ENCODE measurements at regions of chr1 and their contacts with region 1.

Region 1: DNA sequence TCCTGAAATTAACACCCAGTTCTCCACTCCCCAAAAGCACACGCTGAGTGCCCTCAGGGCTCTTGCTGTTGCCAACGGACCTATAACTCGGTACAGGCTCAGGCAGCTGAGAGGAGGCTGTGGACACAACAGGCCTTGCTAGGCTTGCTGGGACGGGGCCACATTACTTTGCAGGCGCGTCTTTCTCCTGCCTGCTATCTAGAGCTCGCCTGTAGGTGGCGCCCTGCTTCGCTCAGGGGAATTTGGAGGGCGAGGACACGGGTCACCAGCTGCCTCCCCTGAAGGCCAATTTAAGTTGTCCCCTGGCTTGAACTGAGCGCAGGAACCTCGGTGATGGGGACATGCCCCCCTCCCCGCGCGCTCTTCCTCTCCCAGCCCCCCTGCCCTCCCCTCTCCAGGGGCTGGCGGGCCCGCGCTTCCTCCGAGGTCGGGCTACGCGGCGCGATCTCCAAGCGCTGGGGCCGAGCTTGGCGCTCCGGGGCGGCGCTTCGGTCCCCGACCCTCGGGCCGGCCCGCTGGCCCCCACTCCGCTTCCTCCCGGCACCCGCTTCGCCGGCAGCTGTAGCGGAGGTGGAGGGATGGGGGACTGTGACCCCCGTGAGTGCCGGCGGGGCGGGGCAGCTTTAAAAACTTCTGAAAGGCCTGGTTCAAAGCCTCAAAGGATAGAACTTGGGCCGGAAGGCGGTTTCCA is 32.4 kb upstream of the NFIA start:
- DNase-seq: peak; percentile 79 to 96 (median 81)
- ATAC-seq: peak; percentile 70
- H3K4me3 ChIP-seq: peak overlapping the region; percentile 65
- H3K27ac ChIP-seq: peak overlapping the region; percentile 82
- H3K4me1 ChIP-seq: peaks cover 44 to 56% of the 10 kb centered on the region in 2 experiments
- H3K27me3 ChIP-seq: no peaks in the 10 kb centered on the region
- CTCF ChIP-seq: peak; percentile 89 to 97 (median 94)
- EP300 ChIP-seq: peak; percentile 62
- POLR2A ChIP-seq: peak; percentile 58; the same call in 1 of the 2 replicates
- RAD21 ChIP-seq: peak; percentile 82

Region 2: DNA sequence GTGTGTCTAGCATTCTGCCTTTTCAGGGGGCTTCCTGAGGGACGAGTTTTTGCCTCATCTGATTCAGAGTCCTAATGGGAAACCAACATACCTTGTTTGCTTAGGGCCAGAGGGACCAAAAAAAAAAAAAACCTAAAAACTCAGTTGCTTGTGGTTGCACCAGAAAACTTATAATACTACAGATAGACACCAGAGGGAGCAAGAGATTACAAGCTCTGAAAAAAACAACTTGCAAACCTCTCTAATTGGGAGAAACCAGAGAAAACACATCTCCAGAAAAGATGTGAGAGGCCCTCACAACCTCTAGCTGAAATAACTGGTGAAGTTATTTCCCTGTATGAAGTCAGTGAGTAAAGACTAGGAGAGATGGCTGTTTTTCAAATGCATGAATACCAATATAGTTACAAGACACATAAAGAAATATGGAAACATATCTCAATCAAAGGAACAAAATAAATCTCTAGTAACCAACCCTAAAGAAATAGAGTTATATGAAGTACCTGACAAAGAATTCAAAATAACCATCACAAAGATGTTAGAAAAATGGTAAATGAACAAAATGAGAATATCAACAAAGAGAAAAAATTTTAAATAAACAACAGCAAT is 201.3 kb before region 1 on chr1:
- CTCF ChIA-PET with region 1: interaction called, 3 read pairs
- POLR2A ChIA-PET with region 1: no interaction called
- in situ Hi-C with region 1: no loop called
- intact Hi-C with region 1: loop called (anchors 5 kb)
- DNase-seq: peak in 2 of 4 experiments; percentile 19 to 53
- ATAC-seq: peak; percentile 90
- H3K4me3 ChIP-seq: no peak overlapping the region
- H3K27ac ChIP-seq: no peak overlapping the region
- H3K4me1 ChIP-seq: no peaks in the 10 kb centered on the region
- H3K27me3 ChIP-seq: no peaks in the 10 kb centered on the region
- CTCF ChIP-seq: peak; percentile 43 to 67 (median 54); a peak in 5 of 6 replicates
- EP300 ChIP-seq: peak; percentile 70
- POLR2A ChIP-seq: no peak
- RAD21 ChIP-seq: peak; percentile 67 to 80

Region 3: GRCh38 chr1:61011561-61012263 is 38.3 kb before region 1 on chr1:
- CTCF ChIA-PET with region 1: no interaction called
- POLR2A ChIA-PET with region 1: interaction called, 14 read pairs
- in situ Hi-C with region 1: no loop called
- intact Hi-C with region 1: loop called (anchors 1 kb)
- DNase-seq: peak in 1 of 4 experiments; percentile 21
- ATAC-seq: no peak
- H3K4me3 ChIP-seq: no peak overlapping the region
- H3K27ac ChIP-seq: peak overlapping the region; percentile 78
- H3K4me1 ChIP-seq: peaks cover 16 to 47% of the 10 kb centered on the region in 2 experiments; a peak in 4 of 5 replicates
- H3K27me3 ChIP-seq: no peaks in the 10 kb centered on the region
- CTCF ChIP-seq: no peak
- EP300 ChIP-seq: no peak
- POLR2A ChIP-seq: no peak
- RAD21 ChIP-seq: no peak

Region 4: GRCh38 chr1:61184040-61184713 is 134.2 kb after region 1 on chr1:
- CTCF ChIA-PET with region 1: no interaction called
- POLR2A ChIA-PET with region 1: no interaction called
- in situ Hi-C with region 1: no loop called
- intact Hi-C with region 1: loop called (anchors 5 kb)
- DNase-seq: peak; percentile 56 to 85 (median 68)
- ATAC-seq: peak; percentile 84
- H3K4me3 ChIP-seq: 0 out of 2 replicates have a peak overlapping the region, but pooled peaks have one; percentile 4
- H3K27ac ChIP-seq: peak overlapping the region; percentile 89
- H3K4me1 ChIP-seq: peaks cover 12 to 32% of the 10 kb centered on the region in 2 experiments
- H3K27me3 ChIP-seq: no peaks in the 10 kb centered on the region
- CTCF ChIP-seq: no peak
- EP300 ChIP-seq: no peak
- POLR2A ChIP-seq: peak; percentile 36; the same call in 1 of the 2 replicates
- RAD21 ChIP-seq: peak in 1 of 2 experiments; percentile 16; a peak in 1 of 4 replicates

Region 5: GRCh38 chr1:61270761-61271411 is 220.9 kb after region 1 on chr1:
- CTCF ChIA-PET with region 1: no interaction called
- POLR2A ChIA-PET with region 1: interaction called, 3 read pairs
- in situ Hi-C with region 1: no loop called
- intact Hi-C with region 1: loop called (anchors 2 kb)
- DNase-seq: peak; percentile 54 to 73 (median 70)
- ATAC-seq: peak; percentile 85
- H3K4me3 ChIP-seq: no peak overlapping the region
- H3K27ac ChIP-seq: peak overlapping the region; percentile 75
- H3K4me1 ChIP-seq: peaks cover 3 to 37% of the 10 kb centered on the region in 2 experiments; a peak in 4 of 5 replicates
- H3K27me3 ChIP-seq: no peaks in the 10 kb centered on the region
- CTCF ChIP-seq: peak; percentile 26 to 59 (median 51); a peak in 5 of 6 replicates
- EP300 ChIP-seq: peak; percentile 83; the same call in 1 of the 2 replicates
- POLR2A ChIP-seq: no peak
- RAD21 ChIP-seq: peak in 1 of 2 experiments; percentile 44; a peak in 3 of 4 replicates

Region 6: DNA sequence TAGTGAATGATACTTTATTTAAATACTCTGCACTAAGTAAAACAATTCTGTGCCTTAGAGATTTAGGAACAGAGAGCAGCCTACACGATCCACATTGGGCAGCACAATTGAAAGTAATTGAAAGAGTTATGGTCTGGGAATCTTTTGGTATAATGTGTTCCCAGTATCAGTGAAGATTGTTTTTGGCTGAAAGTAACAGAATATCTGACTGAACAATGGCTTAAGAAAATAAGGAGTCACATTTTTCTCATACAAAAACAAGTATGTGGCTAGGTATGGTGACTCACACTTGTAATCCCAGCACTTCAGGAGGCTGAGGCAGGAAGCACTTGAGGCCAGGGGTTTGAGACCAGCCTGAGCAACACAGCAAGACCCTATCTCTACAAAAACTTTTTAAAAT is 338.6 kb after region 1 on chr1:
- CTCF ChIA-PET with region 1: no interaction called
- POLR2A ChIA-PET with region 1: no interaction called
- in situ Hi-C with region 1: no loop called
- intact Hi-C with region 1: no loop called
- DNase-seq: no peak
- ATAC-seq: no peak
- H3K4me3 ChIP-seq: no peak overlapping the region
- H3K27ac ChIP-seq: no peak overlapping the region
- H3K4me1 ChIP-seq: peaks cover 0 to 15% of the 10 kb centered on the region in 2 experiments; a peak in 2 of 5 replicates
- H3K27me3 ChIP-seq: no peaks in the 10 kb centered on the region
- CTCF ChIP-seq: no peak
- EP300 ChIP-seq: no peak
- POLR2A ChIP-seq: no peak
- RAD21 ChIP-seq: no peak

Region 7: DNA sequence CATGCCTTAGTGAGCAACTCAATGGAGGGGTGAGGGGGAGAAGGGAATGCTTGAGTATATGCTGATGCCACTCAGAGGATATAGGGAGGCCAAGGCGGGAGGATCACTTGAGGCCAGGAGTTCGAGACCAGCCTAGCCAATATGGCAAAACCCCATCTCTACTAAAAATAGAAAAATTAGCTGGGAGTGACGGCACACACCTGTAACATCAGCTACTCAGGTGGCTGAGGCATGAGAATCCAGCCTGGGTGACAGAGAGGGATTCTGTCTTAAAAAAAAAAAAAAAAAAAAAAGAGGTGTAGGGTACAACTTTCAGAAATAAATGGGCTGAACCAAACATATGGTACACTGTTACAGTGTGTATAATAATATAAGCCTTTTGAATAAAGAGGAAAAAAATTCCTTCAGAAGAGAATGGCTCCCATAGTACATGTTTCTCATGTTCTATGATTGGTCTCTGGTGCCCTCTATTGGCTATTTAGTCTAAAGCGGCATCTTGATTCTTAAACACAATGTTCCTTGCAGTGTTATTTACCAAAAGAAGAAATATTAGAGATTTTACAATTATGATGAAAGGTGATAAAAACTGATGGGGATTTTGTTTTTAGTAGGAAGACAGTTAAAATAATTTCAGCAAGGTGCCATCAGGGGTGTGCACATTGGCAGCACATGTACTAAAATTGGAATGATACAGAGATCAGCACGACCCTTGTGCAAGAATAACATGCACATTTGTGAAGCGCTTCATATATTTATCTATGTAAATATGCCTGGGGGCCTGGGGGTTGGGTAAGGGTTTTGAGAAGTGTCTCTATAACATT is 802.1 kb after region 1 on chr1:
- CTCF ChIA-PET with region 1: no interaction called
- POLR2A ChIA-PET with region 1: no interaction called
- in situ Hi-C with region 1: no loop called
- intact Hi-C with region 1: loop called (anchors 5 kb)
- DNase-seq: peak; percentile 22 to 73 (median 32)
- ATAC-seq: peak; percentile 85
- H3K4me3 ChIP-seq: no peak overlapping the region
- H3K27ac ChIP-seq: no peak overlapping the region
- H3K4me1 ChIP-seq: no peaks in the 10 kb centered on the region
- H3K27me3 ChIP-seq: peaks cover 0 to 2% of the 10 kb centered on the region in 2 experiments; a peak in 2 of 5 replicates
- CTCF ChIP-seq: peak; percentile 49 to 85 (median 54); a peak in 5 of 6 replicates
- EP300 ChIP-seq: no peak
- POLR2A ChIP-seq: no peak
- RAD21 ChIP-seq: peak; percentile 75 to 86

Measured in K562 (cell line).